Heart left ventricle (tissue), 16 donors: ENCODE measurements at regions of chr1 and their contacts with region 1.

Region 1: GRCh38 chr1:173937062-173937461 is 19.9 kb upstream of the SERPINC1 start:
- DNase-seq: no peak
- ATAC-seq: no peak
- H3K4me3 ChIP-seq: no peak overlapping the region
- H3K27ac ChIP-seq: no peak overlapping the region
- H3K4me1 ChIP-seq: no peaks in the 10 kb centered on the region
- H3K27me3 ChIP-seq: no peaks in the 10 kb centered on the region
- CTCF ChIP-seq: no peak
- POLR2A ChIP-seq: no peak

Region 2: DNA sequence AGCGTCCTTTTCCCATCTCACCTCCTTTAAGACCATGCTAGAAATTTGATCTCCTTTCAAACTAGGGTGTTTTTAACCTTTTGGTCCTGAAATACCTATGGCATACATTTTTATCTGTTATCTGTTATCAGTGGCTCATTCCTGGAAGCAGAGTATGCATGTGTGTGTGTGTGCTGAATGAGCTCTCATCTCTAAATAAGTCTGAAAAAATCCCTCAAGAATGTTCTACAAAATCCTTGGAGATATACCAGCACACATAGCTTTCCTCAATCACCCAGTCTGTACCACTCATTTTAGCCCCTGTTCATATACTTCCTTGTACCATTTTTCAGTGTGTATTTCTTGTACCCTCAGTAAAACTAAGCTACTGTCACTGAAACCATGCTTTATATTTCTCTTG is 118.6 kb before region 1 on chr1:
- intact Hi-C with region 1: no loop called
- DNase-seq: no peak
- ATAC-seq: no peak
- H3K4me3 ChIP-seq: no peak overlapping the region
- H3K27ac ChIP-seq: no peak overlapping the region
- H3K4me1 ChIP-seq: peaks cover 0 to 16% (median 3%) of the 10 kb centered on the region in 12 donors
- H3K27me3 ChIP-seq: no peaks in the 10 kb centered on the region
- CTCF ChIP-seq: no peak
- POLR2A ChIP-seq: no peak

Region 3: GRCh38 chr1:173970252-173970651 is 33.2 kb after region 1 on chr1:
- intact Hi-C with region 1: loop called in 1 of 10 experiments (anchors 5 kb)
- DNase-seq: no peak
- ATAC-seq: no peak
- H3K4me3 ChIP-seq: no peak overlapping the region
- H3K27ac ChIP-seq: no peak overlapping the region
- H3K4me1 ChIP-seq: no peaks in the 10 kb centered on the region
- H3K27me3 ChIP-seq: no peaks in the 10 kb centered on the region
- CTCF ChIP-seq: no peak
- POLR2A ChIP-seq: no peak

Region 4: DNA sequence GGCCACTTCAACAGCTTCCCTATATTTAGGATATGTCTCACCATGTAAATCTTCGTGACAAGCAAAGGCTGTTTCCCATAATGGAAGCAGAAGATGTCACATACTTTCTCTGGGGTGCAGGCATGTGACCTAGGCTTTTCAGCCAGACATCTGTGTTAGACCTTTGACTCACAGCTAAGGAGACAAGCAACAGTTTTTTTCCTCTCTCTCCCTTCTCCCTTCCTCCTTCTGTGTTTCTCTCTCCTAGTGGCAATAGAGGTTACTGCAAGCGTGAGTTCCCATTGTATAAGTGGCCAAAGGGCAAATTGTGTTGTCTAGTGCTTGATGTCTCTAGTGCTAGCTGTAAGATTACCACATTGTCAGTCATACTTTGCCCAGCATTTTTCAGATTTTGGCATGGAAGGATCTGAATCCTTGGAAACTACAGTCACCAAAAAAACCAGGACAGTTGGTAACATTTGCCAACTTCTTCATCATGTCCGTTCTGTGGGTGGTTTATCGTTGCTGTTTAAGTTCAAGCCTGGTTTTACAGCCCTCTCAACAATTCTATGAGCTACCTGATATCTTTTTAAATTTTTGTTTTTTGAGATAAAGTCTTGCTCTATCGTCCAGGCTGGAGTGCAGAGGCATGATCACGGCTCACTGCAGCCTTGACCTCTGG is 177.9 kb after region 1 on chr1:
- intact Hi-C with region 1: no loop called
- DNase-seq: no peak
- ATAC-seq: peak in 3 of 4 donors; percentile 34 to 77 (median 48)
- H3K4me3 ChIP-seq: no peak overlapping the region
- H3K27ac ChIP-seq: no peak overlapping the region
- H3K4me1 ChIP-seq: peaks cover 0 to 17% (median 0%) of the 10 kb centered on the region in 12 donors
- H3K27me3 ChIP-seq: no peaks in the 10 kb centered on the region
- CTCF ChIP-seq: peak; percentile 32 to 75 (median 52)
- POLR2A ChIP-seq: no peak